Esophagus muscularis mucosa (tissue), 4 donors: ENCODE measurements at regions of chr6 and their contacts with region 1.

Region 1: DNA sequence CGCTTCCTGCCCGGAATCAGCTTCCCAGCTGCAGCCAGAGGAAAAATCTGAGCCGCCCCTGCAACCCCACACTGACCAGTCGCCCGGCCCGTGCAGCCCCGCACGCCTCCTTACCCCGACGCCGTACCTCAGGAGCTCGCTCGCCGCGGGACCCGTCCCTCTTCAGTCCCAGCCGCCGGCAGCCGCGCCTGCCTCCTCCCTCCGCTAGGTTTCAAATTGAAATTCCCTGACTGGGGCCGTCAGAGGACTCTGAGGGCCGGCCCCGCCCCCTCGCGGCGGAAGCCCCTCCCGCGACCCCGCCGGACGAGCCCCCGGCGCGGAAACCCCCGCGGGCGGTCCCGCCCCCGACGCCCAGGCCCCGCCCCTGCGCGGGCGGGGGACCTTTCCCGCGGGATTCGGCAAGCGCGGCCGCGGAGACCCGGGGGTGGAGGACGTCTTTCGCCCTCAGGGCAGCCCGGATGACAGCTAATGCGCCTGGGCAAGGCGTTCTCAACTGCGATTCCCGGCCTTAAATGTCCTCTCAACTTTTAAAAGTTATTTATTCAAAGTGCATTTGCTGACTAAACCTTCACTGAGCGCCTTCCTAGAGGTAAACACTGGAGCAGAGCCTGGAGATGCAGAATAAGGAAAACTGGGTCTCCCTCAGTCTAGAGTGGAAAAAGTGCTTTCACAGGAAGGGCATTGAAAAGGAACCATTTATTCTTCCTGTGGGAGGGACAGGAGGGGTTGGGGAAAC is at the start of gene EPB41L2:
- DNase-seq: peak; percentile 96
- H3K4me3 ChIP-seq: peak within 1 kb of the TSS; percentile 91 to 98 (median 98)
- H3K27ac ChIP-seq: peak within 1 kb of the TSS; percentile 81 to 92 (median 86)
- H3K4me1 ChIP-seq: peaks cover 7 to 33% (median 22%) of the 10 kb centered on the region in 4 donors
- H3K27me3 ChIP-seq: no peaks in the 10 kb centered on the region
- CTCF ChIP-seq: peak in 2 of 3 experiments; percentile 15 to 60
- EP300 ChIP-seq: no peak
- POLR2A ChIP-seq: peak; percentile 25
- total RNA-seq, gene EPB41L2: 60.1 to 87.2 (median 67.4) TPM

Region 2: DNA sequence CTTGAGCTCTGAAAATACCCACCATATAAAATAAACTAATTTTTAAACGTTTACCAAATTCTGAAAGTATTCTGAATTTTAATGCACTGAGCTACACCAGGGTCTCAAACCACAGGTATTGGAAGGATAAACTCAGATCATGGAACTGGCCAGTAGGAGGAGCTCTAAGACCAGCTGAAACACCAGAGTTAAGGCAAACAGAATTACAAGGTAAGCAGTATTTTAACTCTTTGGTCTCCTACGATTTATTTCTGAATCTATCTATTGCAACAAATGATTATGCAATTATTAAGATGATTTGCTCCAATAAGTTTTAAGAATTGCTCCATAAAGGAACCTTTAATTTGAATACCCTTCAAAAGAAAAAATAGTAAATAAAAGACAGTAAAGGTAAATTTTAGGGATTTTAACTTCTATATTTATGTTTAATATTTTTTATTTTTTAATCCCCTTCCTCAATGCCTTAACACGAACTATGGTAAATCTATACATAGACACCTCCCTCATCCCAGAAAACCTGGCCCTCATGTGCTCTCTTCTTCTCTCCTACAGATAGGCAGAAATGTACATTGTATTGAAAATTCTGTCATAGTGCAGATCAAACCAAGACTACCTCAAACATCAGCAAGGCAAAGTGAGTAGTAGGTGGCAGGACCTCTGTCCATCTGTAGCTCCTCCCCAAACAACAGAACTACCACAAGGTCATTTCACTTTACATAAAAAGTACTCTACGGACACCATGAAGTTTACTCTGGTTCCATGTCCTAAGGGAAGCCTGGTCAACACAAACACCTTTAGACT is 177.6 kb before region 1 on chr6:
- intact Hi-C with region 1: loop called (anchors 5 kb)
- DNase-seq: no peak
- H3K4me3 ChIP-seq: no peak overlapping the region
- H3K27ac ChIP-seq: no peak overlapping the region
- H3K4me1 ChIP-seq: no peaks in the 10 kb centered on the region
- H3K27me3 ChIP-seq: no peaks in the 10 kb centered on the region
- CTCF ChIP-seq: peak; percentile 85 to 88 (median 86)
- EP300 ChIP-seq: no peak
- POLR2A ChIP-seq: no peak

Region 3: GRCh38 chr6:130969791-130970491 is 93.3 kb before region 1 on chr6:
- intact Hi-C with region 1: loop called (anchors 10 kb)
- DNase-seq: no peak
- H3K4me3 ChIP-seq: peak overlapping the region; percentile 38 to 60 (median 48)
- H3K27ac ChIP-seq: peak overlapping the region; percentile 53 to 68 (median 64)
- H3K4me1 ChIP-seq: peaks cover 23 to 51% (median 36%) of the 10 kb centered on the region in 4 donors
- H3K27me3 ChIP-seq: no peaks in the 10 kb centered on the region
- CTCF ChIP-seq: no peak
- EP300 ChIP-seq: no peak
- POLR2A ChIP-seq: no peak

Region 4: DNA sequence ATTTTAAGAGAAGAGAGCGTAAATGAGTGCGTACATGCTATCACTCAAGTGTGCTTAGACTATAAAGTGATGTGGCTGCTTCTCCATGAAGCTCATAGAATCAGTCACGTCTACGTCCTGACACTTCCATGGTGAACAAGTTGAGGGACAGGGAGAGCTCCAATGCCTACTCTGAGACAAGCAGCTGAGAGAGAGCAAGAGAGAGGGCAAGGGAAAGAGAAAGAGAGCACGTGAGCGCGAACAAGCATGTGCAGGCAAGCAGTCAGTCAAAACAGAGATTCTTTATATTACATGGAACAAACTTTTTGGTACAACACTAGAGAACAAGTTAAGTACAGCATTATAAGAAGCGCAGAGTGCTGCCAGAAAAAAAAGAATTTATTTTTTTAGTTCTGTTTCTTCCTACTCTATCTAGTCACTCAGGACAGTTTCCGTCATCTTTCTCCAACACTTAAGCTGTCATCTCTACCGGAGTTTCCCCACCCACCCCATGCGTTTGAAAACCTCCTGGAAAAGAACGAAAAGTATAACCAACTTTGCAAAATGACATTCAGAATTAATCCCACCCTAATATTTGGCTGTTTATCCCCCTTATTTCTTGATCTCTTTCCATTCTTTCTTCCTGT is 62.0 kb before region 1 on chr6:
- intact Hi-C with region 1: loop called (anchors 5 kb)
- DNase-seq: no peak
- H3K4me3 ChIP-seq: peak overlapping the region; percentile 21 to 39 (median 36)
- H3K27ac ChIP-seq: peak overlapping the region; percentile 1 to 46 (median 26)
- H3K4me1 ChIP-seq: peaks cover 20 to 51% (median 37%) of the 10 kb centered on the region in 4 donors
- H3K27me3 ChIP-seq: no peaks in the 10 kb centered on the region
- CTCF ChIP-seq: no peak
- EP300 ChIP-seq: no peak
- POLR2A ChIP-seq: no peak

Region 5: GRCh38 chr6:131135244-131136020 is 72.2 kb after region 1 on chr6 and contains the start of gene AKAP7:
- intact Hi-C with region 1: loop called (anchors 5 kb)
- DNase-seq: no peak
- H3K4me3 ChIP-seq: peak within 1 kb of the TSS; percentile 61 to 94 (median 84)
- H3K27ac ChIP-seq: peak within 1 kb of the TSS; percentile 92 to 95 (median 92)
- H3K4me1 ChIP-seq: peaks cover 4 to 20% (median 16%) of the 10 kb centered on the region in 4 donors
- H3K27me3 ChIP-seq: no peaks in the 10 kb centered on the region
- CTCF ChIP-seq: no peak
- EP300 ChIP-seq: no peak
- POLR2A ChIP-seq: no peak
- total RNA-seq, gene AKAP7: 6.2 to 18.7 (median 8.4) TPM